Sciatic nerve (tissue), 2 donors: ENCODE measurements at regions of chr12 and their contacts with region 1.

Region 1: DNA sequence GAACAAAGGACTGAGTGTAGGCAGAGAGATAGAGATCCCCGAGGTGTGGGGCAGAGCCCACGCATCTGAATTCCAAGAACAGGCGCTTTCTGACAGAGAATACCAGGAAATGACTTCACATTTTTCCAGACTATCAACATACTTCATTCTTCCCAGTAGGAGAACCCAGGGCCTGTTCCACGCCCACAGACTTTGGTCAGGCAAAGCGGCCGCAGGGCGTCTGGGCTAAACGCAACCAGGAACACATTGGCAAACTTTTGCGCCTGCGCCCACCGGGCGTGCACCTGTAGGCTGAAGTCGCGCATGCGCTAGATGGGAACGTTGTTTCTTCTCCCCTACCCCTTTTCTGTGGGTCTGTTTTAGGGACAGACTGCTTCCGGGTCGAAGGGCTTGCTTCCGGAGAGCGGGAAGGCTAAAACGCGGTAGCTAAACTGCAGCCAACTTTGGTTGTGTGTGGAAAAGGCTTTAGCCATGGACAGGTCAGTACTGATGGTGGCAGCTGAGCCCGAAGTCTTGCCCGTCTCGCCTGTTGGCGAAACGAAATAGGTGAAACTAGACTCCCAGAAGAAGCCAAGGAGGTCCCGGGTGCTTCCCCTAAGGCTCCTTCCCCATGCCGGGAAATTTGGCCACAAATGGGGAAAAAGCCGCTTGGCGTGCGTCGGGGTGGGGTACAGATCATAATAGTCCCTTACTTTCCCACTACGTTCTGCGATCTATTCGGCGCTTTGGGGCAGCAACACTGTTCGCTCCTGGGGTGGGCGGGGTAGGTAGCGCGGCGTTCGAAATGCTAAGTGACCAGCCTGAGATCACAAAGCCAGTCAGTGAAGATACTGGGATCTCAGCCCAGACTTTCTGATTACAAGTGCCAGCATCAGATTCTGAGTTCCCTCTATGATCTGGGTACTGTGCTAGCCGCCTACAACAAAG is at the start of gene NUP107:
- DNase-seq: peak; percentile 100
- ATAC-seq: peak; percentile 99
- total RNA-seq, gene NUP107: 51.4 TPM

Region 2: GRCh38 chr12:68364893-68365725 is 321.7 kb before region 1 on chr12:
- intact Hi-C with region 1: loop called (anchors 10 kb)
- DNase-seq: peak; percentile 90
- ATAC-seq: peak; percentile 98

Region 3: DNA sequence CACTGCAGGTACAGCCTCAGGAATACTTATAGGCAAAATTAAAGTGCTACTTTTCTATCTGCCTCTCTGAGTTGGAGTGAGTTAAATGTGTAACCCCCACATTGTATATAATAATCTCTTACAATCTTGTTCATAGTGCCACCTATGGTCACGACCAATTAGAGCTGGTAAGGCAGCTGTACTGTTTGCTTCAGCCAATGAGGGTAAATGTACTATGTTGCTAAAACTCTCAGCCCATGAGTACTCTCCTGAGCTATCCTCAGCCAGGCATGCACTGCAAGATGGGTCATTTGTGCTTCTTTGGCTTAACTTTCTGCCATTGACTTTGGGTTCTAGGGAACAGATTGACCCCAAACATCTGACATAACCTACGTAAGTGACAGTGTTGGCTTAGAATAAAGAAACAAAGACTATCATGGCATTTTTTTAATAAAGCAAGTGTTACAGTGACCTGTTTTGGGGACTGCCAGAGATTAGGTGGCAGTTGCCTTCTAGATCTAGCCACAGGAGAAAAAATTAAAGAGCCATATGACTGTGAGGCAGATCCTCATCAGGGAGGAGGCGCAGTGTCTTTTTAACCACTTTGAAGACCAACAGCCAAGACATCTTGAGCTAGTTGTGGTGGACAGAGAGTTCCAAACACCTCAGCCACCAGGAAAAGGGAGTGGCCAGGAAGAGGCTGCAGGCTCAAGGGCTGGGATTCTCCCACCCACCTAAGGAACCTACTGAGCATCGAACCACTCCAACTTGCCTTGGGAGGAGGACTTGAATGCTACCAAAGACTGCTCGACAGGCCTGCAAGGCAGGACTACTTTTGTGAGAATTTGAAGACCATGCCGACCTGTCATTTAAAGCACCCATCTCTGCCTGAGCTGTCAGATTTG is 106.3 kb after region 1 on chr12:
- intact Hi-C with region 1: no loop called
- DNase-seq: no peak
- ATAC-seq: no peak